ENCODE measurements at regions of chr2 and their contacts with region 1.

Region 1: GRCh38 chr2:230219419-230220331 is at the start of gene SP110:
- DNase-seq: peak; percentile 96
- H3K4me3 ChIP-seq: peak within 1 kb of the TSS; percentile 53 to 64 (median 59)
- H3K27ac ChIP-seq: peak within 1 kb of the TSS; percentile 57
- H3K4me1 ChIP-seq: peaks cover 21% of the 10 kb centered on the region
- H3K27me3 ChIP-seq: no peaks in the 10 kb centered on the region
- CTCF ChIP-seq: no peak
- total RNA-seq, gene SP110: 11.2 to 12.9 TPM

Region 2: DNA sequence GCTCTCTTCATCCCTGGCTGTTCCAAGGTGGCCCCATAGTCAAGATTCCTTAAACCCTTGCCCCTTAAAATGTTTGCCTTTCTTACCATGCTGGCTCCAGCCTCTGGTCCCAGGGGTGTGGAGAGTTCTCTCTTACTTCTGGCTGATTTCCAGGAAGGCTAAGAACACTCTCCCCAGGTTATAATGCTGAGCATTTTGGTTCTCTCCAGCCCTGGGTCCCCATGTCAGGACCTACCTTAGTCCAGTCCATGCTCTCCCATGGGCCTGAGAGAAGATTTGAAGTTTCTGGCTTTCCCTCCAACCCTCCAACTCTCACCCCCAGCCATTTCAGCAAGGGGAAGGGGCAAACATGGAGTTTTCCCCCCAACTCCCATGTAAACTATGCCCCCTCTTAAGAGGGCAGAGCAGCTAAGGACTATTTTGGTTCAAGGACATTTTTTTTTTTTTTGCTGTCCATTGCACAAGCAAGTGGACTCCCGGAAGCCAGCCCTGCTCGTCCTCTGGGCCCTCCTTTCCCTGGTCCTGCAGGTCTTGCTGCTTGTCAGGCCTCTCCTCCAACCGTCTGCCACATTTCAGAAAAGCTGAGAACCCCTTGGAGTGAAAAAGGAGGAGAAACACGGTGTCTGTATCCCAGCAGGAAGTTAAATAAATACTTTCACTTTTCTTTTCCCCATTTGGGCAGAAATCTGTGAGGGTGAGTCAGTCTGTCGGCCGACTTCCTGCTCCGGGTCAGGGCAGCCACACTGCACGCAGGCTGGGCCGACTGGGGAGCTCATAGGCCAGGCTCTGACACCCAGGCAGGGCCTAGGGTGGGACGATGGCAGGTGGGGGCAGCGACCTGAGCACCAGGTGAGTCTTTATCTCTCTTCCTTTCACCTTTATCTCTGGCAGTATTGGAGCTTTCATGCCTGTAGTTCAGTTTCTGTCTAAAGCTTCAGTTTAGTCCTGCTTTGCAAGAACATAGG is 107.1 kb after region 1 on chr2 and contains the start of gene SP140L:
- CTCF ChIA-PET with region 1: no interaction called
- dilution Hi-C with region 1: no loop called
- in situ Hi-C with region 1: no loop called
- intact Hi-C with region 1: loop called (anchors 1 kb)
- DNase-seq: peak; percentile 68
- H3K4me3 ChIP-seq: peak within 1 kb of the TSS; percentile 45 to 64 (median 61)
- H3K27ac ChIP-seq: peak within 1 kb of the TSS; percentile 63
- H3K4me1 ChIP-seq: peaks cover 11% of the 10 kb centered on the region
- H3K27me3 ChIP-seq: no peaks in the 10 kb centered on the region
- CTCF ChIP-seq: no peak
- total RNA-seq, gene SP140L: 2.5 to 14.7 TPM

Region 3: GRCh38 chr2:230602562-230603230 is 383.0 kb after region 1 on chr2:
- CTCF ChIA-PET with region 1: no interaction called
- dilution Hi-C with region 1: no loop called
- in situ Hi-C with region 1: loop called in 1 of 2 experiments (anchors 25 kb)
- intact Hi-C with region 1: no loop called
- DNase-seq: no peak
- H3K4me3 ChIP-seq: no peak overlapping the region
- H3K27ac ChIP-seq: no peak overlapping the region
- H3K4me1 ChIP-seq: no peaks in the 10 kb centered on the region
- H3K27me3 ChIP-seq: no peaks in the 10 kb centered on the region
- CTCF ChIP-seq: no peak

Measured in mammary epithelial cell (primary cell).